Calu3 (cell line): ENCODE measurements at regions of chr10 and their contacts with region 1.

Region 1: GRCh38 chr10:80509403-80510161 is 28.1 kb upstream of the SH2D4B start:
- DNase-seq: peak; percentile 78
- H3K4me3 Mint-ChIP-seq: peak overlapping the region; percentile 44
- H3K27ac Mint-ChIP-seq: peak overlapping the region; percentile 82
- H3K4me1 Mint-ChIP-seq: peaks cover 80% of the 10 kb centered on the region
- H3K27me3 Mint-ChIP-seq: no peaks in the 10 kb centered on the region
- CTCF ChIP-seq: no peak

Region 2: DNA sequence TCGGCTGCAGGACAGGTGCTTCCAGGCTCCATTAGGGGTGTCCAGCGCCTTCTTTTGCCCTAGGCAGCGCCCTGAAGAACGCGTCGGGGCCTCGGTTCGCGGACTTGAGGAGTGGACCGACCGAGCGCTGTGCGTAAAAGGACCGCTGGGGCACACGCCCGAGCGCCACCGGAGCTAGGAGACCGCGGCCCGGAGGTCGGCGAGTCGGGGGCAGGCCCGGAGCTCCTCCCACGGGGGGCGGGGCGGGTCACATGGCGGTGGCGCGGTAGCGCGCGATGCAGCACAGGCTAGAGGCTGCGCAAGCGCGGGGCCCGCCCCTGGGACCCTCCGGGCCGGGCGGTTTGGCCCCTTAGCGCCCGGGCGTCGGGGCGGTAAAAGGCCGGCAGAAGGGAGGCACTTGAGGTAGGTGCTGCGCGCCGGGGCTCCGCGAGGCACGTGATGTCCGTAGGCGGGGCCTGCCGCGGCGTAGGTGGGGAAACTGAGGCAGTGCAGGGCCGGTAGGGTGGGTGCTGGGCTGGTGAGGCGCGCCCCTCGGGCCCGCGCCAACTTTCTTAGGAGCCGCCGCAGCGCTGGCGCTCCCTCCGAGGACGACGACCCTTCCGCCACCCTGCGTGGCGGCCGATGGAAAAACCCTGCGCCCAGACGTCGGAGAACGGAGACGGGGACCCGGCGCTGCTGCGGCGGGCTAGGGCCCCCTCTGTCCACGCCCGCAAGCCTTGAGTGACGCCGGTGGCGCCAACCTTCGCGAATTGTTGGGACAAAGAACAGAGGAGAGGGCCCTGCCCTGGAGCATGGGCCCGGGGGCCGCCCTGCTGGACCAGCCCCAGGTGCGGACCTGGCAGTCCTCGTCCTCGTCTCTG is 101.1 kb before region 1 on chr10 and contains the start of gene PRXL2A:
- CTCF ChIA-PET with region 1: interaction called, 15 read pairs
- intact Hi-C with region 1: no loop called
- DNase-seq: peak; percentile 96
- H3K4me3 Mint-ChIP-seq: peak within 1 kb of the TSS; percentile 76
- H3K27ac Mint-ChIP-seq: peak within 1 kb of the TSS; percentile 60
- H3K4me1 Mint-ChIP-seq: peaks cover 40% of the 10 kb centered on the region
- H3K27me3 Mint-ChIP-seq: no peaks in the 10 kb centered on the region
- CTCF ChIP-seq: no peak
- total RNA-seq, gene PRXL2A: 61.4 and 67.2 TPM in 2 replicates

Region 3: DNA sequence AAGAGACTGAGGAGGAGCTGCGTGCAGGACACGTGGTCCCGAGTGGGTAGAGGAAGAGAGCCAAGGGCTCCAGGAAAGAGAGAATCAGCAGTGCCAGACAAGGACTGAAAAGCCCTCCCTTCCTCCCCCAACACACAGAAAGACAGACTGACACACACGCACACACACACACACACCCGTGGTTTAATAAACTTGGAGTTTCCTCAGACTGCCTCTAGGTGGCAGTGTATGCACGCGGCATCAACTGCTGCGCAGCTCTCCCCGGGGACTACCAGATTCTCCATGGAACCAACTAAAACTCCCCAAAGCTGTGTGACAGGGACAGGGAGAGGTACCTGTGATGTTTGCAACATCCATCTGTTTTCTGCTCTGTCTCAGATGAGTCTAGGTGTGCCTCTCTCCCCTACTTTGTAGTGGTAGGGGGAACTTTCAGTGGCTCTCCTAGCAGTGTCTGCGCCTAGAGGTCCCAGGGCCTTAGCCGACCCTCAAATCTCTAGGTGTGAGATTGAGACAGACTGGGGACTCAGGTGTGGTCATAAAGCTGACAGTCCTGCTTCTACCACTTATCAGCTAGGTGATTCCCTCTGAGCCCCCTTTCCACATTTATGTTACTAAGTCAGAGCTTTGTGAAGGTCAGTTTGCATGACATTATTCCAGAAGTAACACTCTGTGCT is 64.8 kb before region 1 on chr10:
- CTCF ChIA-PET with region 1: interaction called, 116 read pairs
- intact Hi-C with region 1: loop called (anchors 2 kb)
- DNase-seq: peak; percentile 66
- H3K4me3 Mint-ChIP-seq: no peak overlapping the region
- H3K27ac Mint-ChIP-seq: no peak overlapping the region
- H3K4me1 Mint-ChIP-seq: peaks cover 31% of the 10 kb centered on the region
- H3K27me3 Mint-ChIP-seq: peaks cover 20% of the 10 kb centered on the region
- CTCF ChIP-seq: peak; percentile 73

Region 4: GRCh38 chr10:80460399-80461207 is 49.0 kb before region 1 on chr10:
- CTCF ChIA-PET with region 1: interaction called, 122 read pairs
- intact Hi-C with region 1: loop called (anchors 2 kb)
- DNase-seq: peak; percentile 95
- H3K4me3 Mint-ChIP-seq: peak overlapping the region; percentile 58
- H3K27ac Mint-ChIP-seq: peak overlapping the region; percentile 94
- H3K4me1 Mint-ChIP-seq: peaks cover 89% of the 10 kb centered on the region
- H3K27me3 Mint-ChIP-seq: no peaks in the 10 kb centered on the region
- CTCF ChIP-seq: no peak

Region 5: DNA sequence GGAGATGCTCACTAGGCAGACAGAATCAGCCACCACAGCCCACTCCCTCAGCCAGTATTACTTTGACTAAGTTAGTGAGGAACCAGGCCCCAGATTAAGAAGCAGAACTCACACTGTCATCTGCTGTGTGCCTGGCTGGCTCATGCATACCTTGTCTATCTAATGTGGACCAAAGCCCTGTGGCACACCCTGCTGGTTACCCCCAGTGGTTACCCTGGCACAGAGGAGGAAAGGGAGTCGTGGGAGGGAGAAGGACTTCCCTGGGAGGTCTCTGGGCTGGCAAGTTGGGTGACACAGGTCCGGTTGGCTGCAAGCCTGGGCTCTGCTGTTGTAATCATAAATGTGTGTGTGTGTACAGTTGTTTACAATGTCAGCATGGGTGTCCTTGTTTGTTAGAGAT is 20.7 kb after region 1 on chr10:
- CTCF ChIA-PET with region 1: no interaction called
- intact Hi-C with region 1: loop called (anchors 1 kb)
- DNase-seq: peak; percentile 77
- H3K4me3 Mint-ChIP-seq: no peak overlapping the region
- H3K27ac Mint-ChIP-seq: no peak overlapping the region
- H3K4me1 Mint-ChIP-seq: no peaks in the 10 kb centered on the region
- H3K27me3 Mint-ChIP-seq: no peaks in the 10 kb centered on the region
- CTCF ChIP-seq: peak; percentile 72

Region 6: GRCh38 chr10:80670763-80671162 is 161.2 kb after region 1 on chr10:
- CTCF ChIA-PET with region 1: no interaction called
- intact Hi-C with region 1: no loop called
- DNase-seq: no peak
- H3K4me3 Mint-ChIP-seq: no peak overlapping the region
- H3K27ac Mint-ChIP-seq: no peak overlapping the region
- H3K4me1 Mint-ChIP-seq: peaks cover 6% of the 10 kb centered on the region
- H3K27me3 Mint-ChIP-seq: peaks cover 60% of the 10 kb centered on the region
- CTCF ChIP-seq: no peak

Region 7: DNA sequence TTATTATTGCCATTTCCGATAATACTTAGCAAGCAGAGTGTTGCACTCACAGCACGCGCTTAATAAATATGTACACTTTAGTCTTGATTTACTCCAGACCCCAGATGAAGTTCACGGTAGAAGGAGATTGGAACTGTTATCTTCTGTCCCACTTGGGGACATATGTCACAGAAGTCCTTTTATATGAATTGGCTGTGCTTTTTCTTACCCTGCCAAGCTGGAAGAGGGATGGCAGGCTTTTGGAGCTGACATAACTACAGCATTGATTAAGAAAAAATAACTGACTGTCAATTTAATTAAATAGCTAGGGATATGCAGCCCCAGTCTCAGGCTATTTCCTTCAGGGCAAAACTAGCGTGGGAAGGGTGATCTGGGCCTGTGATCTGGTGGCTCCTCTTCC is 210.4 kb after region 1 on chr10:
- CTCF ChIA-PET with region 1: no interaction called
- intact Hi-C with region 1: no loop called
- DNase-seq: no peak
- H3K4me3 Mint-ChIP-seq: no peak overlapping the region
- H3K27ac Mint-ChIP-seq: no peak overlapping the region
- H3K4me1 Mint-ChIP-seq: no peaks in the 10 kb centered on the region
- H3K27me3 Mint-ChIP-seq: peaks cover 36% of the 10 kb centered on the region
- CTCF ChIP-seq: no peak